PC-9 (cell line): ENCODE measurements at regions of chr3 and their contacts with region 1.

Region 1: GRCh38 chr3:154060238-154061000 is 60.8 kb upstream of the ARHGEF26 start:
- DNase-seq: no peak
- H3K4me3 ChIP-seq: no peak overlapping the region
- H3K27ac ChIP-seq: no peak overlapping the region
- H3K4me1 ChIP-seq: no peaks in the 10 kb centered on the region
- H3K27me3 ChIP-seq: no peaks in the 10 kb centered on the region
- CTCF ChIP-seq: no peak

Region 2: DNA sequence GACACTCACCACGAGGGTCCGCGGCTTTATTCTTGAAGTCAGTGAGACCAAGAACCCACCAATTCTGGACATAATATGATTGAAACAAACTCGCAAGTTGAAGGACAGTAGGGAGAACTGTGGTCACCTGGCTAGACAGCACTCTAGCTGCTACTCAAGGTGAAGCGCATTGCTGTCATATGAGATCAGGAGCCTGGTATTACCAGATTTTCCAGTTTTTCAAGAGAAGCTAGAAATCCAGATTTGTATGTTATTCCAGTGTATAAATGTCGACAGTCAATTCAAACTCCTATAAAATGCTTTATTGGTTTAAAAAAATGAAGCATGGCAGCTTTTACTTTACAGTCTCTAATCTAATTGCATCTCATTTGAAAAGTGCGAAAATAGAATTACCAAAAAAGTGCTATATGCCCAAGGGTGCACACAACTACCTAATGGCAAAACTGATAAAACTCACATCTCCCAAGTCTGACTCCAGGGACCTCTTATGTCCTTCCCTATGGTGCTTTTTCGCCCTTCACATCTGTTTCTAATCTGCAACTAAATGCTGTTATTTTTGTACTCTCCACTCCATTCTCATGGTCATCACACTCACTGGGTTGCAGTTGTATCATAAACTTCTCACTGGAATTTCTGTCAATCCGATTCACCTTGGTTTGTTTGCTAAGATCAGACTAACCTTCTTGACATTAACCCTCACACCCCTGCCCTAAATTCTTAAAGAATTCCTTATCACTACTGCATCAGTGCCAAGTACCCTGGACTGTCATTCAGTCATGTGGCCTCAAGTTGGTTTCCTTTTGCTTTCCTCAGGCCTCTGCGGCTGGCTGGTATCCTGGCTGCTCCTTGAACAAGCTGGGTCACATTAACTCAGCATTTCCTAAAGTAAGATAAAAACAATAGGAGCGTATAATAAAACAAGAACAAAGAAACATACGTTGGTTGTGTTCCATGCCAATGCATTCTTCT is 29.3 kb after region 1 on chr3:
- CTCF ChIA-PET with region 1: no interaction called
- POLR2A ChIA-PET with region 1: interaction called, 3 read pairs
- intact Hi-C with region 1: loop called (anchors 2 kb)
- DNase-seq: peak; percentile 37 to 93
- H3K4me3 ChIP-seq: peak overlapping the region; percentile 36; the same call in 1 of the 2 replicates
- H3K27ac ChIP-seq: peak overlapping the region; percentile 39
- H3K4me1 ChIP-seq: peaks cover 26% of the 10 kb centered on the region
- H3K27me3 ChIP-seq: no peaks in the 10 kb centered on the region
- CTCF ChIP-seq: no peak